RWPE1 (cell line): ENCODE measurements at regions of chr13 and their contacts with region 1.

Region 1: GRCh38 chr13:79160818-79161217 is 245.2 kb downstream of the RBM26 start:
- DNase-seq: no peak
- H3K27ac ChIP-seq: no peak overlapping the region
- CTCF ChIP-seq: no peak

Region 2: GRCh38 chr13:78742659-78743058 is 418.2 kb before region 1 on chr13:
- CTCF ChIA-PET with region 1: interaction called, 11 read pairs
- POLR2A ChIA-PET with region 1: no interaction called
- DNase-seq: no peak
- H3K27ac ChIP-seq: no peak overlapping the region
- CTCF ChIP-seq: no peak

Region 3: GRCh38 chr13:79398915-79399314 is 238.1 kb after region 1 on chr13:
- CTCF ChIA-PET with region 1: no interaction called
- POLR2A ChIA-PET with region 1: no interaction called
- DNase-seq: peak; percentile 16
- H3K27ac ChIP-seq: no peak overlapping the region
- CTCF ChIP-seq: no peak